Activated naive CD4-positive, alpha-beta T cell treated with anti-CD3 and anti-CD28 coated beads for 36 hours (primary cell): ENCODE measurements at regions of chr1 and their contacts with region 1.

Region 1: DNA sequence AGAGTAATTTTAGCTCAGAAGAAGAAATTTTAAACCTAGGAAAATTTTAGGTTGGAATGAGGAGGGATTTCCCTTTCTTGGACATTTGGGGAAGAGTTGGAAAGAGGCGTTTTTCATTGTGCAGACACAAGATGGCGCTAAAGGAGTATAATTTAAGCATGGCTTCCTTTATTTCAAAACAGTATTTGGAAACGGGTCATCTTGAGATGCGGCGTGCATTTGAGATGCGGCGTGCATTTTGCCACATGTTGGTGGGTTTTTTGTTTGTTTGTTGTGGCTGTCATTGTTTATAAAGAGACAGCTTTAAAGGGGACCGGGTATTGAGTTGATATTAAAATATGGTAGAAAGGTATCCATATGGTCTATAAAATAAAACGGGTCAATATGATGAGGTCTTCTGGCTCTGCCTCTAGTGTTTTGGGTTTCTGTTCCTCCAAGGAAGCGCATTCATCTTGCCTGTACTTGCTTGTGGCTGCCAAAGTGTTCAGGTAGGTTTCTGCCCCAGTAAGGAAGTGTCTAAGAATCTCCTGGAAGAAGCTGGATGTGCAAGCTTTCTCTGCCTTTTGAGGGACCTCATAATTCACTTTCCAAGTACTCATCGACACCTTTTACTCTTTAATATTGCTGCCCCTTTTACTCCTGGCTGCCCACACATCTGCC is 210.3 kb downstream of the SLC35F3 start:
- DNase-seq: peak; percentile 43
- H3K4me3 Mint-ChIP-seq: peak overlapping the region; percentile 41
- H3K27ac Mint-ChIP-seq: no peak overlapping the region
- H3K4me1 Mint-ChIP-seq: peaks cover 6% of the 10 kb centered on the region
- H3K27me3 Mint-ChIP-seq: peaks cover 27% of the 10 kb centered on the region

Region 2: DNA sequence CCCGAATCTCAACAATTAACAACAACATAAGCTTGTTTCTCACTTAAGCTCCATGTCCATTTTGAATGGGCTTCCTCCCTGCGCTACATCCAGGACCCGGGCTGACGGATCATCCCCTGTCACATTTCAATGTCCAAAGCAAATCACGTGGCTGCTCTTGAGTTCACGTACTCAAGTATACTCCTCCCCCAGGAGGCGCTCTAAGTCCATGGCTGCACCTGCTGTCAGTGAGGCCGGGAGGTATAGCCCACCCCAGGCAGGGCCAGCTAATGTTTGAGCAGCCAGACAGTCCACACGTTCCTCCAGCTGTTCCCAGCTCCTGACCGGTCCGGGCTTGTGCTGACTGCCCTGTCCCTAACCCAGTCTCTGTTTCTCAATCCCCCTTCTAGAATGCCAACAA is 10.5 kb after region 1 on chr1:
- CTCF ChIA-PET with region 1: interaction called, 21 read pairs
- intact Hi-C with region 1: no loop called
- DNase-seq: peak; percentile 57
- H3K4me3 Mint-ChIP-seq: no peak overlapping the region
- H3K27ac Mint-ChIP-seq: no peak overlapping the region
- H3K4me1 Mint-ChIP-seq: no peaks in the 10 kb centered on the region
- H3K27me3 Mint-ChIP-seq: peaks cover 29% of the 10 kb centered on the region

Region 3: GRCh38 chr1:234154320-234155251 is 39.8 kb after region 1 on chr1:
- CTCF ChIA-PET with region 1: no interaction called
- intact Hi-C with region 1: loop called (anchors 2 kb)
- DNase-seq: peak; percentile 31
- H3K4me3 Mint-ChIP-seq: no peak overlapping the region
- H3K27ac Mint-ChIP-seq: no peak overlapping the region
- H3K4me1 Mint-ChIP-seq: no peaks in the 10 kb centered on the region
- H3K27me3 Mint-ChIP-seq: no peaks in the 10 kb centered on the region

Region 4: DNA sequence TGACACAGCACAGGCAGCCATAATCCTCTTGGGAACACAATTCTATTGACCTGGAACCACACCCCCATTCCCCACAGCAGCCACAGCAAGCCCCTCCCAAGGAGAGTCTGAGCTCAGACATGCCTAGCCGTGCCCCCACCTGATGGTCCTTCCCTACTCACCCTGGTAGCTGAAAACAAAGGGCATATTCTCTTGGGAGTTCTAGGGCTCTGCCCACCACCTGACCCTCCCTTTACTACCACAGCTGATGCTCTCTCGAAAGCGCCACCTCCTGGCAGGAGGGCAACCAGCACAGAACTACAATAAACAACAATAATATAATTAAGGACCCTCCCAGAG is 73.6 kb after region 1 on chr1:
- CTCF ChIA-PET with region 1: interaction called, 10 read pairs
- intact Hi-C with region 1: no loop called
- DNase-seq: peak; percentile 21
- H3K4me3 Mint-ChIP-seq: no peak overlapping the region
- H3K27ac Mint-ChIP-seq: no peak overlapping the region
- H3K4me1 Mint-ChIP-seq: no peaks in the 10 kb centered on the region
- H3K27me3 Mint-ChIP-seq: peaks cover 41% of the 10 kb centered on the region

Region 5: GRCh38 chr1:234212764-234213657 is 98.2 kb after region 1 on chr1:
- CTCF ChIA-PET with region 1: interaction called, 7 read pairs
- intact Hi-C with region 1: loop called (anchors 1 kb)
- DNase-seq: peak; percentile 56
- H3K4me3 Mint-ChIP-seq: no peak overlapping the region
- H3K27ac Mint-ChIP-seq: no peak overlapping the region
- H3K4me1 Mint-ChIP-seq: peaks cover 12% of the 10 kb centered on the region
- H3K27me3 Mint-ChIP-seq: peaks cover 43% of the 10 kb centered on the region